ENCODE measurements at regions of chr4 and their contacts with region 1.

Region 1: DNA sequence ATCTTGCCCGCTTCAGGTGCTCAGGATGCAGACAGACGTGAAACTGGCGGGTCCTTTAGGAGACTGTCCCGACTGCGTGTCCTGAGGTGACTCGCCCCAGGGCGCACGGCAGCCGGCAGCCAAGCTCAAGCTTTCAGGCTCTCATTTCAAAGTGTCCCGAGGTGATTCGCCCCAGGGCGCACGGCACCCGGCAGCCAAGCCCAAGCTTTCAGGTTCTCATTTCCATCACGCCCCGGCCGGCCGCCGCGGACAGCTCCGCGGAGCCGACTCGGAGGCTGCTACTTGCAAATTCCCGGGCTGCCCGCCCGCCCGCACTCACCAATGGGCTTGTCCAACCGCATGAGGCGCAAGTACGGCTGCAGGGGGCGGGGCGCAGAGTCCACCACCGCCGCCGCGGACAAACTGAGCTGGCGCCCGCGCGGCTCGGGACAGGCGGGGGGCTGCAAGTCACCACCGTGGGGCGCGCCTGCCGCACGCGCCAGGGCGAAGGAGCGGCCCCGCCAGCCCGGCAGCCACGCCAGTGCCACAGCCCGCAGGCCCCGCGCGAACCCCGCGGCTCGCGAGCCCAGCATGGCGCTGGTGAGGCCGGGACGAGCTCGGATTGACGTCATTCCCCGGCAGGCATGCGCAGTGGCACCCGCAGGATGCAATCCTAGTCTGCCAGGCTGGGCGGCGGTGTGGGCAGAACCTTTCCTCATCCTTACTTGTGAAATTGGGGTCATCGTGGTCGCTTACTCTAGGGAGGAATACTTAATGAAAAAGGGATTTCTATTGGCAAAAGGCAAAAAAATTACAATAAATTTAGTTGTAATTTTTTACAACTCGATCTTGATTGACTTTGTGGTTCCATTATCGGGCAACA is at the start of gene COQ2:
- DNase-seq: peak; percentile 96

Region 2: GRCh38 chr4:82388405-82388804 is 896.0 kb before region 1 on chr4:
- CTCF ChIA-PET with region 1: no interaction called
- POLR2A ChIA-PET with region 1: no interaction called
- DNase-seq: no peak

Region 3: GRCh38 chr4:83272900-83273299 is 11.5 kb before region 1 on chr4:
- CTCF ChIA-PET with region 1: interaction called, 5 read pairs
- POLR2A ChIA-PET with region 1: interaction called, 13 read pairs
- DNase-seq: no peak

Region 4: DNA sequence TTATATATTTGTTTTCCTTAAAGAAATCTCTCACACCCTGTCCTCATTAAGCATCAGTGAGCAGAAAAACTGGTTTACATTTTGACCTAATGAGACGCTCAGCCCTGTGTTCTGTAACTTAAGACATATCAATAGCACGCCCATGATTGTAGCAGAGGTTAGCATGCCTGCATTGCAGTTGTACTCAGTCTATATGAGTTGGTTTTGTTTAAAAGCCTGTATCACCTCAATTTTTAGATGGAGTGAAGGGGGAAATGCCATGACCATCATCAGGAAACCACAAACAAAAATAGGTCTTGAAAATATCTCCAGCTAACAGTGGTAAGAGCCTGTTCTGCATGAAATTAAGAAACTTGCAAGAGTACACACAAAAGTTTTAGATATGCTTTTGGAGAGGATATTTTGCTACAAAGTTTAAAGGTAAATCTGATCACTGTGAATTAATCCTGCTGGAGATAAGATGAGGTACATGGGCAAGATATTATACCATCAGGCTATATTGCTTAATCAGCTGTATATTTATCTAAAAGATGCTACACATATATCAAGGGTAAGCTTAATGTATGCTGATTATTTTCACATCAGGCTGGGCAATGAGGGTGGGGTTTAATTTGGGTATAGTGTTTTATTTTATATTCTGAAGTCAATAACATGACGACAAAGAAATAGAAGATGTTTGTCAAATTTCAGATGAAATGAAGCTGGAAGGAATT is 13.3 kb after region 1 on chr4:
- CTCF ChIA-PET with region 1: interaction called, 3 read pairs
- POLR2A ChIA-PET with region 1: interaction called, 13 read pairs
- DNase-seq: no peak

Region 5: GRCh38 chr4:83308672-83309071 is 24.2 kb after region 1 on chr4:
- CTCF ChIA-PET with region 1: interaction called, 3 read pairs
- POLR2A ChIA-PET with region 1: interaction called, 13 read pairs
- DNase-seq: no peak

Region 6: DNA sequence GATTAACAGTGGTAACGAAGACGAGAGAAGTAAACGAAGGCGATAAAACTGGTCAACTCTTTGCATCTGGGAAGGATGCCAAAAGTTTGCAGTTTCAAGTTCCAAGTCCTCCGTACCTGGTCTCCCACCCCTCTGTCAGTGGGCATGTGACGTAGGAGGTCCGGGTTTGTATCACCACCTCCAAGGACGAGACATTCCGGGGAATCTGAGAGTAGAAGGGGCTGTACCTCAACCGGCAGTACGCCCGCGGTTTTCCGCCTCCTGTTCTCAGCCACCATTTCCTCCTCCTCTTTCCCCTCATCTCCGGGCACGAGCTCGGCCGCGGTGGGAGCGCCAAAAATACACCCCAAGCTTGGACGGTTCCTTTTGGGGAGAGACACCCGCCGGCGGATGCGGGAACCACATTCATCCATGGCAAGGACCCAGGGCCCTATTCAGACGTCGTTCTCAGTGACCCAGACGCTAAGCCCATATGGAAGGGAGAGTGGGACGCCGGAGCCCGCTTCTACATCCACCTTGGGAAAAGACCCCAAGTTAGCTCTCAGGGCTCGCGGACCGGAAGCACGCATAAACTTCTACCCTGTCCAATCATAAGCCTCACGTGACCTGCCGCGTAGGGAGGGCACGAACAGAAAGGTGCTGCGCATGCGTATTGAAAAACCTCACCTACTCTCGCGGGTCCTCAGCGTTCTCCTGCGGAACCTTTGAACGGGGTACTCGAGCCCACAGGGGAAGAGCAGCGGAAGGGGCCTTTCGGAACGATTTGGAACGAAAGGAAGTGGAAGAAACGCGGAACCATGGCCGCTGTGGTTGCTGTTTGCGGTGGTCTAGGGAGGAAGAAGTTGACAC is 171.1 kb after region 1 on chr4 and contains the starts of genes HELQ and MRPS18C:
- CTCF ChIA-PET with region 1: no interaction called
- POLR2A ChIA-PET with region 1: interaction called, 20 read pairs
- DNase-seq: peak; percentile 96

Region 7: DNA sequence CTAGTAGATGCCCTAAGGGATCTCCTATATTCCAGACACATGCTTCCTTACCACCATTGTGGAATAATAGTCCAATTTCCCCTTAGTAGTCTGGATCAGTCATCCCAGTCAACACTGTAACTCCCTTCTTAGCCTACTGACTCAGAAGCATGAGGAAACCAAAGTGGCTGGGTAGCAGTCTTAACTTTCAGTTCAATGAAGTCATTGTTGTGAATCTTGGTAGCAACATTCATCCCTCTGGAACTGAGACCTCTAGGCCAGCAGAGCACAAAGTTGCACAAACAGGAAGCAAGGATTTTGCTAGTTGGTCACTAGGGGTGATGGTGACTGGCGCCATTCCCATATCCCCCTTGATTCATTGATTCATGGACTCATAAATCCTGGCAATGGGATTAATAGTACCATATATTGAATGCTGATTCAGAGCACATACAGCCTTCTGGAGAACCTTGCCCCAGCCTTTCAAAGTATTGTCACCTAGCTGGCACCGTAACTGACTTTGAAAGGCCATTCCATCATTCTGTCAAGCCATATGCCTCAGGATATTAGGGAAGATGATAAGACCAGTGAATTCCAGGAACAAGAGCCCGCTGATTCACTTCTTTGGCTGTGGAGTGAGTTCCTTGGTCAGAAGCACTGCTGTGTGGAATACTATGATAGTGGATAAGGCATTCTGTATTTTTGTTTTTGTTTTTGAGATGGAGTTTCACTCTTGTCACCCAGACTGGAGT is 231.8 kb after region 1 on chr4:
- CTCF ChIA-PET with region 1: no interaction called
- POLR2A ChIA-PET with region 1: no interaction called
- DNase-seq: no peak

Measured in HEK293T (cell line).